ENCODE measurements at regions of chr14 and their contacts with region 1.

Region 1: GRCh38 chr14:105944632-105945610 is 418.5 kb downstream of the TMEM121 start:
- DNase-seq: peak; percentile 34
- ATAC-seq: peak; percentile 93
- H3K4me3 ChIP-seq: no peak overlapping the region
- H3K27ac ChIP-seq: no peak overlapping the region
- H3K4me1 ChIP-seq: peaks cover 0 to 3% of the 10 kb centered on the region in 2 experiments; a peak in 1 of 4 replicates
- H3K27me3 ChIP-seq: no peaks in the 10 kb centered on the region
- CTCF ChIP-seq: peak; percentile 87 to 93 (median 90)
- POLR2A ChIP-seq: no peak
- RAD21 ChIP-seq: peak; percentile 93

Region 2: GRCh38 chr14:105537369-105538164 is 407.4 kb before region 1 on chr14:
- CTCF ChIA-PET with region 1: interaction called, 3 read pairs
- POLR2A ChIA-PET with region 1: no interaction called
- RAD21 ChIA-PET with region 1: no interaction called
- intact Hi-C with region 1: loop called (anchors 5 kb)
- DNase-seq: no peak
- ATAC-seq: peak; percentile 95
- H3K4me3 ChIP-seq: peak overlapping the region in 1 of 2 experiments; percentile 23; a peak in 1 of 4 replicates
- H3K27ac ChIP-seq: no peak overlapping the region
- H3K4me1 ChIP-seq: peaks cover 0 to 3% of the 10 kb centered on the region in 2 experiments; a peak in 1 of 4 replicates
- H3K27me3 ChIP-seq: no peaks in the 10 kb centered on the region
- CTCF ChIP-seq: peak; percentile 63 to 96 (median 89); a peak in 5 of 6 replicates
- POLR2A ChIP-seq: no peak
- RAD21 ChIP-seq: peak; percentile 67

Region 3: DNA sequence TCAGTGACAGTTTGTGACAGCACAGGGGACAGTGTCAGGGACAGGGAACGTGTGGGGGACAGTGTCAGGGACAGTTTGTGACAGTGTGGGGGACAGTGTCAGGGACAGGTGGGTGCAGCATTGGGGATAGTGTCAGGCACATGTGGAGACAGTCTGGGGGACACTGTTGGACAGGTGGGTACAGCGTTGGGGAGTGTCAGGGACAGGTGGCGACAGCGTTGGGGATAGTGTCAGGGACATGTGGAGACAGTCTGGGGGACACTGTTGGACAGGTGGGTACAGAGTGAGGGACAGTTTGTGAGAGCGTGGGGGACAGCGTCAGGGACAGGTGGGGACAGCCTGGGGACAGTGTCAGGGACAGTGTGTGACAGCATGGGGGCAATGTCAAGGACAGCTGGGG is 278.5 kb before region 1 on chr14:
- CTCF ChIA-PET with region 1: no interaction called
- POLR2A ChIA-PET with region 1: no interaction called
- RAD21 ChIA-PET with region 1: no interaction called
- intact Hi-C with region 1: loop called (anchors 5 kb)
- DNase-seq: no peak
- ATAC-seq: no peak
- H3K4me3 ChIP-seq: no peak overlapping the region
- H3K27ac ChIP-seq: no peak overlapping the region
- H3K4me1 ChIP-seq: no peaks in the 10 kb centered on the region
- H3K27me3 ChIP-seq: no peaks in the 10 kb centered on the region
- CTCF ChIP-seq: no peak
- POLR2A ChIP-seq: no peak
- RAD21 ChIP-seq: no peak

Region 4: DNA sequence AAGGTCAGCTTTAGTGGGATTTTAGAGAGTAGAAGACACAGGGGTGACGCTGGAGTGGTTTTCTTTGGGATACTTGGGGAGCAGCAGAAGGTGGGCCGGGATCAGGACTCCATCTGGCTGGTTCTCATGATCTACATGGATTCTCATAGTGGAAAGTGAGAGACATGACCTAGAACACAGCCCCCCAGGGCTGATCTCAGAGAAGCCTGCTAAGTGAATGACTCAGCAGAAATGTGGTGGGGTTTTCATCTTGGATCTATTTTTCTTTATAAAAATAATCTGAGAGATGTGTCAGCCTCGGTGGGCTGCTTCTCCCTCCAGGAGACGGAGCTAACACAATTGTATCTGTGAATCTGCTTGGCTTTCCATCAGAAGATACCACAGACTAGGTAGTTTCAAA is 65.9 kb after region 1 on chr14:
- CTCF ChIA-PET with region 1: interaction called, 5 read pairs
- POLR2A ChIA-PET with region 1: no interaction called
- RAD21 ChIA-PET with region 1: no interaction called
- intact Hi-C with region 1: loop called (anchors 1 kb)
- DNase-seq: no peak
- ATAC-seq: no peak
- H3K4me3 ChIP-seq: no peak overlapping the region
- H3K27ac ChIP-seq: no peak overlapping the region
- H3K4me1 ChIP-seq: no peaks in the 10 kb centered on the region
- H3K27me3 ChIP-seq: no peaks in the 10 kb centered on the region; the same call in 1 of the 2 replicates
- CTCF ChIP-seq: no peak
- POLR2A ChIP-seq: no peak
- RAD21 ChIP-seq: no peak